SK-N-SH (cell line): ENCODE measurements at regions of chr14 and their contacts with region 1.

Region 1: GRCh38 chr14:101964297-101965144 is at the start of gene DYNC1H1:
- DNase-seq: peak; percentile 96
- H3K4me3 ChIP-seq: peak within 1 kb of the TSS; percentile 90 to 97
- H3K27ac ChIP-seq: peak within 1 kb of the TSS; percentile 83 to 92
- H3K4me1 ChIP-seq: peaks cover 22 to 37% of the 10 kb centered on the region in 2 experiments; a peak in 3 of 4 replicates
- H3K27me3 ChIP-seq: no peaks in the 10 kb centered on the region
- CTCF ChIP-seq: no peak
- EP300 ChIP-seq: no peak
- RAD21 ChIP-seq: no peak
- polyA plus RNA-seq, gene DYNC1H1: 110 and 140 TPM in 2 replicates

Region 2: GRCh38 chr14:101707068-101707842 is 257.3 kb before region 1 on chr14:
- CTCF ChIA-PET with region 1: interaction called, 13 read pairs
- POLR2A ChIA-PET with region 1: no interaction called
- DNase-seq: peak; percentile 83
- H3K4me3 ChIP-seq: peak overlapping the region in 1 of 2 experiments; percentile 16; a peak in 1 of 4 replicates
- H3K27ac ChIP-seq: no peak overlapping the region
- H3K4me1 ChIP-seq: peaks cover 0 to 9% of the 10 kb centered on the region in 2 experiments; a peak in 1 of 4 replicates
- H3K27me3 ChIP-seq: no peaks in the 10 kb centered on the region
- CTCF ChIP-seq: peak; percentile 80
- EP300 ChIP-seq: no peak
- RAD21 ChIP-seq: peak; percentile 95

Region 3: DNA sequence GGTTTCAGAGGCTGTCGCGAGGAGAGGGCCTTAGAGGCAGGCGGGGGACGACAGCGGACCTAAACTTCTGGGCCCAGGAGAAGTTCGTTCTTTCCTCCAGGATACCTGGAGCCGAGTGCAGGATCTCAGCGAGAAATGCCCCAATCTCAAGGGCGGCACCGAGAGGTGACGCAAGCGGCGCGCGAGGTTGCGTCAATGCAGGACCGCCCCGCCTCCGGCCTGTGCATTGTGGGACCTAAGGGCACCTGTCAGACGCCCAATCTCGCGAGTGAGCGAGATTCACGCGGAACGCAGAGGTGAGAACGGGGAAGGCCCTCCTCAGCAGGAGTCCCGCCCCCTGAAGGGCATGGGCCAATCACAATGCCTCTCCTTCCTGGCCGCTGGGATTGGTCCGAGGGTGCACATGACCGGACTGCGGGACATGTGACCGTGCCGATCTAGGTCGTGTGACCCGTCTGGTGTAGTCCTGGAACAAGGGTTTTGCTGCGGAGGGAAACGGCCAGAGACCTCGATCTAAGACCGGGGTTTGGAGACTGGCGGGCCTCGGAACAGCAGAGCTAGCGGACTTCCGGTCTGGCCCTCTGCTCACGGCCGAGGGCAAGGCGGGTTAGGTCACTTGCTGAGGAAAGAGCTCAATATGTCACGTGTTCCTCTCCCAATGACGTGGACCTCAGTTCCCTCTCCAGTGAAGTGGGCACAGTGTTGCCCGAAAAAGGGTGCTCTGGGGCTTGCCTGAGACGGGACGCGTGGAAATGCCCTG is 16.4 kb before region 1 on chr14:
- CTCF ChIA-PET with region 1: interaction called, 10 read pairs
- POLR2A ChIA-PET with region 1: interaction called, 4 read pairs
- DNase-seq: peak; percentile 97
- H3K4me3 ChIP-seq: peak overlapping the region; percentile 83 to 91
- H3K27ac ChIP-seq: peak overlapping the region; percentile 86 to 94
- H3K4me1 ChIP-seq: peaks cover 0 to 13% of the 10 kb centered on the region in 2 experiments; a peak in 1 of 4 replicates
- H3K27me3 ChIP-seq: no peaks in the 10 kb centered on the region
- CTCF ChIP-seq: no peak
- EP300 ChIP-seq: no peak
- RAD21 ChIP-seq: no peak

Region 4: DNA sequence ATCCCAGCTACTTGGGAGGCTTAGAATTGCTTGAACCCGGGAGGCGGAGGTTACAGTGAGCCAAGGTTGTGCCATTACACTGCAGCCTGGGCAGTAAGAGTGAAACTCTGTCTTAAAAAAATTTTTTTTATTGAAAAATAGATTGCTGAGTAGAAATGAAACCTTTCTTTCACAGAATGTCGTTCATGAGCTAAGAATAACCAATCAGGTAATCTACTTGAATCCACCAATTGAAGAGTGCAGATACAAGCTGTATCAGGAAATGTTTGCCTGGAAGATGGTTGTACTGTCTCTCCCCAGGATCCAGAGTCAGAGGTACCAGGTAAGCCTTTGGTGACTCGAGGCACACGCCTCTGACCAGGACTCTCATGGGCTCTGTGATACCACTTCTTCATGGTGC is 26.8 kb after region 1 on chr14:
- CTCF ChIA-PET with region 1: interaction called, 11 read pairs
- POLR2A ChIA-PET with region 1: interaction called, 3 read pairs
- DNase-seq: no peak
- H3K4me3 ChIP-seq: no peak overlapping the region
- H3K27ac ChIP-seq: no peak overlapping the region
- H3K4me1 ChIP-seq: peaks cover 0 to 1% of the 10 kb centered on the region in 2 experiments; a peak in 1 of 4 replicates
- H3K27me3 ChIP-seq: no peaks in the 10 kb centered on the region
- CTCF ChIP-seq: no peak
- EP300 ChIP-seq: no peak
- RAD21 ChIP-seq: no peak

Region 5: GRCh38 chr14:102008891-102009290 is 44.4 kb after region 1 on chr14:
- CTCF ChIA-PET with region 1: interaction called, 11 read pairs
- POLR2A ChIA-PET with region 1: interaction called, 3 read pairs
- DNase-seq: no peak
- H3K4me3 ChIP-seq: no peak overlapping the region
- H3K27ac ChIP-seq: no peak overlapping the region
- H3K4me1 ChIP-seq: no peaks in the 10 kb centered on the region
- H3K27me3 ChIP-seq: no peaks in the 10 kb centered on the region
- CTCF ChIP-seq: no peak
- EP300 ChIP-seq: no peak
- RAD21 ChIP-seq: no peak

Region 6: GRCh38 chr14:102096214-102097114 is 131.9 kb after region 1 on chr14:
- CTCF ChIA-PET with region 1: interaction called, 33 read pairs
- POLR2A ChIA-PET with region 1: no interaction called
- DNase-seq: peak; percentile 80
- H3K4me3 ChIP-seq: peak overlapping the region in 1 of 2 experiments; percentile 4; a peak in 1 of 4 replicates
- H3K27ac ChIP-seq: no peak overlapping the region
- H3K4me1 ChIP-seq: peaks cover 5 to 9% of the 10 kb centered on the region in 2 experiments; a peak in 2 of 4 replicates
- H3K27me3 ChIP-seq: no peaks in the 10 kb centered on the region
- CTCF ChIP-seq: peak; percentile 91
- EP300 ChIP-seq: no peak
- RAD21 ChIP-seq: peak; percentile 91